CD4-positive, alpha-beta T cell (primary cell): ENCODE measurements at regions of chr21 and their contacts with region 1.

Region 1: GRCh38 chr21:7924421-7924820 is 2597.0 kb upstream of the TPTE start:
- DNase-seq: no peak
- ATAC-seq: no peak
- H3K4me3 ChIP-seq: no peak overlapping the region
- H3K4me3 Mint-ChIP-seq: no peak overlapping the region
- H3K27ac ChIP-seq: no peak overlapping the region
- H3K27ac Mint-ChIP-seq: no peak overlapping the region
- H3K4me1 ChIP-seq: no peaks in the 10 kb centered on the region
- H3K4me1 Mint-ChIP-seq: no peaks in the 10 kb centered on the region
- H3K27me3 ChIP-seq: no peaks in the 10 kb centered on the region
- H3K27me3 Mint-ChIP-seq: no peaks in the 10 kb centered on the region
- CTCF ChIP-seq: no peak

Region 2: DNA sequence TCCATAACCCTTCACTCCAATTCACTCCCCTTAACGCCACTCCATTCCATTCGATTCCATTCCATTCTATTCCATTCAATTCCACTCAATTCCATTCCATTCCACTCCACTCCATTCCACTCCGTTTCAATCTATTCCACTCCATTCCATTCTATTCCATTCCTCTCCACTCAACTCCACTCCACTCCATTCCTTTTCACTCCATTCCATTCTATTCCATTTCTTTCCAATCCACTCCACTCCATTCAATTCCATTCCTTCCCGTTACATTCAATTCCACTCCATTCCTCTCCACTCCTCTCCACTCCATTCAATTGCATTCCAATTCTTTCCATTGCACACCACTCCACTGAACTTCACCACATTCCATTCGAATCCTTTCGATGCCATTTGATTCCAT is 23.4 kb after region 1 on chr21:
- CTCF ChIA-PET with region 1: no interaction called
- POLR2A ChIA-PET with region 1: no interaction called
- intact Hi-C with region 1: loop called in 1 of 2 experiments (anchors 2 kb)
- DNase-seq: no peak
- ATAC-seq: no peak
- H3K4me3 ChIP-seq: no peak overlapping the region
- H3K4me3 Mint-ChIP-seq: no peak overlapping the region
- H3K27ac ChIP-seq: no peak overlapping the region
- H3K27ac Mint-ChIP-seq: no peak overlapping the region
- H3K4me1 ChIP-seq: no peaks in the 10 kb centered on the region
- H3K4me1 Mint-ChIP-seq: no peaks in the 10 kb centered on the region
- H3K27me3 ChIP-seq: no peaks in the 10 kb centered on the region
- H3K27me3 Mint-ChIP-seq: no peaks in the 10 kb centered on the region
- CTCF ChIP-seq: no peak